Caco-2 (cell line): ENCODE measurements at regions of chr5 and their contacts with region 1.

Region 1: GRCh38 chr5:109468737-109469420 is 59.1 kb upstream of the PJA2 start:
- DNase-seq: peak; percentile 77 to 87
- H3K4me3 ChIP-seq: no peak overlapping the region
- H3K4me3 Mint-ChIP-seq: no peak overlapping the region
- H3K27ac Mint-ChIP-seq: no peak overlapping the region
- H3K4me1 ChIP-seq: no peaks in the 10 kb centered on the region
- H3K4me1 Mint-ChIP-seq: no peaks in the 10 kb centered on the region
- H3K27me3 ChIP-seq: no peaks in the 10 kb centered on the region
- H3K27me3 Mint-ChIP-seq: peaks cover 3% of the 10 kb centered on the region
- CTCF ChIP-seq: peak; percentile 66 to 78

Region 2: GRCh38 chr5:108919591-108920326 is 549.1 kb before region 1 on chr5:
- CTCF ChIA-PET with region 1: no interaction called
- POLR2A ChIA-PET with region 1: no interaction called
- intact Hi-C with region 1: loop called (anchors 5 kb)
- DNase-seq: no peak
- H3K4me3 ChIP-seq: no peak overlapping the region
- H3K4me3 Mint-ChIP-seq: no peak overlapping the region
- H3K27ac Mint-ChIP-seq: no peak overlapping the region
- H3K4me1 ChIP-seq: peaks cover 8% of the 10 kb centered on the region; the same call in 1 of the 2 replicates
- H3K4me1 Mint-ChIP-seq: peaks cover 16% of the 10 kb centered on the region
- H3K27me3 ChIP-seq: no peaks in the 10 kb centered on the region
- H3K27me3 Mint-ChIP-seq: no peaks in the 10 kb centered on the region
- CTCF ChIP-seq: peak; percentile 18 to 42

Region 3: GRCh38 chr5:109304309-109304708 is 164.6 kb before region 1 on chr5:
- CTCF ChIA-PET with region 1: no interaction called
- POLR2A ChIA-PET with region 1: no interaction called
- intact Hi-C with region 1: loop called (anchors 2 kb)
- DNase-seq: no peak
- H3K4me3 ChIP-seq: no peak overlapping the region
- H3K4me3 Mint-ChIP-seq: no peak overlapping the region
- H3K27ac Mint-ChIP-seq: no peak overlapping the region
- H3K4me1 ChIP-seq: no peaks in the 10 kb centered on the region
- H3K4me1 Mint-ChIP-seq: no peaks in the 10 kb centered on the region
- H3K27me3 ChIP-seq: no peaks in the 10 kb centered on the region
- H3K27me3 Mint-ChIP-seq: peaks cover under 1% of the 10 kb centered on the region
- CTCF ChIP-seq: peak in 1 of 2 experiments; percentile 18